CD4-positive, alpha-beta T cell (primary cell): ENCODE measurements at regions of chr7 and their contacts with region 1.

Region 1: GRCh38 chr7:1940402-1940786 is 270.3 kb downstream of the ELFN1 start:
- DNase-seq: peak; percentile 86 to 97 (median 90)
- ATAC-seq: peak; percentile 83
- H3K4me3 ChIP-seq: peak overlapping the region; percentile 85
- H3K4me3 Mint-ChIP-seq: peak overlapping the region; percentile 99
- H3K27ac ChIP-seq: peak overlapping the region; percentile 91 to 96
- H3K27ac Mint-ChIP-seq: peak overlapping the region; percentile 100
- H3K4me1 ChIP-seq: peaks cover 89% of the 10 kb centered on the region
- H3K4me1 Mint-ChIP-seq: peaks cover 66% of the 10 kb centered on the region
- H3K27me3 ChIP-seq: no peaks in the 10 kb centered on the region
- H3K27me3 Mint-ChIP-seq: peaks cover 4% of the 10 kb centered on the region
- CTCF ChIP-seq: no peak

Region 2: DNA sequence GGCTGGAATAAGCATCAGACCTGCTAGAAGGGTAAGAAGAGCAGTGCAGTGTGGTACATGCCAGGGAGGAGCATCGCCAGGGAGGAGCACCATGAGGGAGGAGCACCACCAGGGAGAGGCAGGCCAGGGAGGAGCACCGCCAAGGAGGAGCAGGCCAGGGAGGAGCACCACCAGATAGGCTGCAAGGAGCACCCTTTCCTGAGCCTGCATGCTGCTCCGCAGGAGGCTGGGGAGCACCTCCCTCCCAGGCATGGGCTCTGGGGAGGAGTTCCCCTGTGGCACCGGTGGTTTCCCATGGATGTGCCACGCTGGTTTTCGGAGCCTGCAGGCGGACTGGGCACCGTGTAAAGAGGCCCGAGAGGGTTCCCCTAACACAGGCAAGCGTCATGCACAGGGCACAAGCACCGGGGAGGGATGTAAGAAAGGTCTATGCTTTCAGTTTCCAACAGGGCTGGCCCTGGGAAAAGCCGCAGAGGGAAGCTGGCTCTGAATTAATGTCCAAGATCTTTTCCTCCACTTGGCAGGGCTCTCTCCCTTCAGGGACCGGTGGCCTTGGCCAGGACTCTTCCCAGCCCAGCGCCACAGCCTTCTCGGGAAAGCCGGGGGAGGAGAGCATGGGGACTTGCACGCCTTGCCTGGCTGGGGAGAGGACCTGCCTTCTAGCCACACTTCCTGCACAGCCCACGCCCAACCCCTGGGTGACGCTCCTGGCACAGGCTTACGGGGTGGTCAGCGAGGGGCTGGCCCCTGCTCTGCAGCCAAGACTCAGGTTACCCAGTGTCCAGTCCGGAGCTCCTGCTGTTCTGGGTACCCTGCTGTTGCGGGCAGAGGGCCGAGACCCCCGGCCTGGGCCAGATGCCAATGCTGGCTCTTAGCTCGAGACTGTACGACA is 864.0 kb before region 1 on chr7:
- CTCF ChIA-PET with region 1: no interaction called
- POLR2A ChIA-PET with region 1: no interaction called
- intact Hi-C with region 1: no loop called
- DNase-seq: no peak
- ATAC-seq: no peak
- H3K4me3 ChIP-seq: no peak overlapping the region
- H3K4me3 Mint-ChIP-seq: no peak overlapping the region
- H3K27ac ChIP-seq: no peak overlapping the region
- H3K27ac Mint-ChIP-seq: no peak overlapping the region
- H3K4me1 ChIP-seq: no peaks in the 10 kb centered on the region
- H3K4me1 Mint-ChIP-seq: no peaks in the 10 kb centered on the region
- H3K27me3 ChIP-seq: no peaks in the 10 kb centered on the region
- H3K27me3 Mint-ChIP-seq: no peaks in the 10 kb centered on the region
- CTCF ChIP-seq: no peak

Region 3: DNA sequence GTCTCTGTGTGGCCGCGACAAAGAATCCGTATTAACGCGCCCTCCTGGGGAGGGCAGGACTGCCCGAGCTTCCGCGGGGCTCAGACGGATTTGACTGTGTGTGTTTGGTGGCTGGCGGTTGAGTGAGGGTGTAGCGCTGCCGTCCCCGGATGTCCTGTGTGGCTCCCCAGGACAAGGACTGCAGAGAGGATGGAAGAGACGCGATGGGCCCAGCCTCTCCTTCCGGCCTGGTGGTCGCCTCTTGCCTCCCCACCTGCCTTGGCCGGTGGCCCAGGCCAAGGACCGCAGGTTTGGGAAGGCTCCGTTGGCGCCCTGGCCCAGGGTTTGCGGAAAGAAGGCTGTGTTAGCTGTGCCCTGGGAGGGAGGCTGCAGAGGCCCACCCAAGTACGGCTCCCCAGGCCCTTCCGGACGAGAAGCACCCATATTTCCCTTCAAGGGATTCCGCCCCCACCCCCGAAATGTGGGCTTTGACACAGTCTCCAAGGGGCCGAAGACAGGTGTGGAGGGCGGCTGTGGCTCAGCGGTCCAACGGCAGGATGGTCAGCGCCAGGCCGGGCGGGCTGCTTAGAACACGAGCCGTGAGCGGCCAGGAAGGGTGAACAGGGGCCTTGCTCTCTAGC is 705.4 kb before region 1 on chr7:
- CTCF ChIA-PET with region 1: no interaction called
- POLR2A ChIA-PET with region 1: no interaction called
- intact Hi-C with region 1: no loop called
- DNase-seq: peak in 2 of 14 experiments; percentile 24 to 38
- ATAC-seq: no peak
- H3K4me3 ChIP-seq: no peak overlapping the region
- H3K4me3 Mint-ChIP-seq: peak overlapping the region; percentile 43
- H3K27ac ChIP-seq: no peak overlapping the region
- H3K27ac Mint-ChIP-seq: peak overlapping the region; percentile 61
- H3K4me1 ChIP-seq: peaks cover 48% of the 10 kb centered on the region
- H3K4me1 Mint-ChIP-seq: peaks cover 33% of the 10 kb centered on the region
- H3K27me3 ChIP-seq: peaks cover 70 to 78% of the 10 kb centered on the region in 2 experiments
- H3K27me3 Mint-ChIP-seq: peaks cover 68% of the 10 kb centered on the region
- CTCF ChIP-seq: no peak

Region 4: DNA sequence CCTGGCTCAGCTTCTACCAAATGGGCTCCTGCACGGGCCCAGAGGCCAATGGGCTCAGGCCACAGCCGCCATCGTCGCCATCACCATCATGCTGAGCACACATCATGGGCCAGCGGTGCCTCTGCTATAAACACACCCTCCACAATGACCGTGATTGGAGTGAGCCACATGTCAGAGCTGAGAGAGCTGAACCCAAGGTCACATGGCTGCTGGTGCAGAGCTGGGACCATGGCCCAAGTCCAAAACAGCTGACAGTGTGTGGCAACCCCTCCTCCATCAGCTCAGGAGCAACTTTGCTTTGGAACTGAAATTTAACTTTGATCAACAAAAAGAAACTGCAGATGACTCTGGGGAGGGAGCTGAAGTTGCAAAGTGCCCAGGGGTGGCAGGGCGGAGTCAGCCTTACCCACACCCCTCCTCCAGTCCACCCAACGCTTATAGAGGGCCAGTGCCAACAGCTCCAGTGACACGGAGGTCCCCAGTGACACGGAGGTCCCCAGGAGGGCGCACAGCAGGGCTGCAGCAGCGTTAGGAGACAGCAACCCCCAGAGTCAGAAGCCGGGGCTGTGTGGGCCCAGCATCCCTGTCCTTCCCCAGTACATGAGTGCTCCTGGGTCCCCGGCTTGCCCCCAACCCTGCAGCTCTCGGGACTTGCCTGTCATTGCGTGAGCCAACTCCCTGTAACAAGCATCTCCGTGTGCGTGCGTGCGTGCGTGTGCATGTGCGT is 20.7 kb before region 1 on chr7:
- CTCF ChIA-PET with region 1: no interaction called
- POLR2A ChIA-PET with region 1: interaction called, 206 read pairs
- intact Hi-C with region 1: no loop called
- DNase-seq: peak in 3 of 14 experiments; percentile 31 to 47 (median 42)
- ATAC-seq: peak; percentile 25
- H3K4me3 ChIP-seq: peak overlapping the region; percentile 46
- H3K4me3 Mint-ChIP-seq: peak overlapping the region; percentile 86
- H3K27ac ChIP-seq: no peak overlapping the region
- H3K27ac Mint-ChIP-seq: peak overlapping the region; percentile 92
- H3K4me1 ChIP-seq: peaks cover 80% of the 10 kb centered on the region
- H3K4me1 Mint-ChIP-seq: peaks cover 73% of the 10 kb centered on the region
- H3K27me3 ChIP-seq: no peaks in the 10 kb centered on the region
- H3K27me3 Mint-ChIP-seq: no peaks in the 10 kb centered on the region
- CTCF ChIP-seq: no peak

Region 5: DNA sequence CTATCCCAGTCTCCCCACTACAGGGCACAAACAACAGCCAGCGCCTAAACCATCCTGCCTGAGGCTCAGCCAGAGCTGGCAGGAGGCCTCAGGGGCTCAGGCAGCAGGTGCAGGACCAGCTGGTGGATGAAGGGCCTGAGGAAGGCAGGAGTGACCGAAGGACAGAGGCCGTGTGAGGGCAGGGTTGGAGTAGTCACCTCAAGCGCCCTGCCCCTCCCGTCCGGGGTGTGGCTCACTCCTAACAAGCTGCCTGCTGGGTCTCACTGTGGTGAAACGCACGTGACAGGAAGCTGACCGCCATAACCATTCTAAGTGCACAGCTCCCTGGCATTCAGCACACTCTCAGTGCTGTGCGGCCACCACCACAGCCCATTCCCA is 10.8 kb after region 1 on chr7:
- CTCF ChIA-PET with region 1: no interaction called
- POLR2A ChIA-PET with region 1: interaction called, 28 read pairs
- intact Hi-C with region 1: no loop called
- DNase-seq: peak in 6 of 14 experiments; percentile 15 to 72 (median 40)
- ATAC-seq: peak; percentile 73
- H3K4me3 ChIP-seq: no peak overlapping the region
- H3K4me3 Mint-ChIP-seq: no peak overlapping the region
- H3K27ac ChIP-seq: no peak overlapping the region
- H3K27ac Mint-ChIP-seq: peak overlapping the region; percentile 63
- H3K4me1 ChIP-seq: peaks cover 19% of the 10 kb centered on the region
- H3K4me1 Mint-ChIP-seq: peaks cover 17% of the 10 kb centered on the region
- H3K27me3 ChIP-seq: no peaks in the 10 kb centered on the region
- H3K27me3 Mint-ChIP-seq: no peaks in the 10 kb centered on the region
- CTCF ChIP-seq: no peak

Region 6: GRCh38 chr7:2004841-2005725 is 64.7 kb after region 1 on chr7:
- CTCF ChIA-PET with region 1: no interaction called
- POLR2A ChIA-PET with region 1: no interaction called
- intact Hi-C with region 1: no loop called
- DNase-seq: peak in 2 of 14 experiments; percentile 1 to 2
- ATAC-seq: no peak
- H3K4me3 ChIP-seq: no peak overlapping the region
- H3K4me3 Mint-ChIP-seq: no peak overlapping the region
- H3K27ac ChIP-seq: no peak overlapping the region
- H3K27ac Mint-ChIP-seq: no peak overlapping the region
- H3K4me1 ChIP-seq: no peaks in the 10 kb centered on the region
- H3K4me1 Mint-ChIP-seq: peaks cover 8% of the 10 kb centered on the region
- H3K27me3 ChIP-seq: no peaks in the 10 kb centered on the region
- H3K27me3 Mint-ChIP-seq: no peaks in the 10 kb centered on the region
- CTCF ChIP-seq: no peak

Region 7: DNA sequence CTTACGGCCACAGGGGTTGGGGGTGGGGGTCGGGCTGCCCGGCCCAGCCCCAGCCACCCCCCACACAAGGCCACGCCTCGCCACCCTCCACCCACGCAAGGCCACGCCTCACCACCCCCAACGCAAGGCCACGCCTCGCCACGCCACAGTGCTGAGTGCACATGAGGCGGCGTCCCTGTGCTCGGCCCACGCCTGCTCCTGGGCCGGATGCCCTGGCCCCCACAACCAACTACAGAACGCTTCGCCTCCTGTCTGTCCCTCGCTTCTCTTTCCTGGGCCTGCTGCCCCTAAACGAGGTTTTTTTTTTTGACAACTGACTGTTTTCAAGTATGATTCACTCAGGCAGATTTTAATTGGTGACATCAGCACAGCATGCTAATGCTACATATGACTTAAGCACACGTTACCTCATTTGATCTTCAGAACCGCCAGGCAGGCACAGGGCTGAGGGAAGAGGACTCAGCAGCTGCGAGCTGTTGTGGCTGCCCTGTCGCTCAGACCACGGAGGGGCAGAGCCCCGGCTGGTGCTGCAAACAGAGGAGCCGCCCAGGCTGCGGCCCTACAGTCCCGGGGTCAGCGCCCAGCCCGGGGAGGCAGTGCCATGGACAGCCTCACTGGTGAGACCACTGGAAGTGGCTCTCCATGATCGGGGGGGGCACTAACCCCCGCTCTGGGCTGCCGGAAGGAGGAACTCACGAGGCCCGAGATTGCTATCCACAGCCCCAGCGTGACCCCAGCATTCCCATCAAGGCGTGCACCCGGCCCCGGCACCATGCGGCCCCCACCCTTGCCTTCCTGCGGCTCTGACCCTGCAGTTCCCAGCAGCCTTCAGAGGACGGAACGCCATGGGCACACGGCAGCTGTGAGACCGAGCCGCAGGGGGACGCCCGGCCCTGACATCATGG is 79.5 kb after region 1 on chr7:
- CTCF ChIA-PET with region 1: no interaction called
- POLR2A ChIA-PET with region 1: no interaction called
- intact Hi-C with region 1: loop called in 1 of 2 experiments (anchors 1 kb)
- DNase-seq: peak in 9 of 14 experiments; percentile 13 to 77 (median 49)
- ATAC-seq: peak; percentile 91
- H3K4me3 ChIP-seq: peak overlapping the region; percentile 24
- H3K4me3 Mint-ChIP-seq: peak overlapping the region; percentile 49
- H3K27ac ChIP-seq: peak overlapping the region in 1 of 2 donors; percentile 51
- H3K27ac Mint-ChIP-seq: peak overlapping the region; percentile 81
- H3K4me1 ChIP-seq: peaks cover 15% of the 10 kb centered on the region
- H3K4me1 Mint-ChIP-seq: peaks cover 17% of the 10 kb centered on the region
- H3K27me3 ChIP-seq: no peaks in the 10 kb centered on the region
- H3K27me3 Mint-ChIP-seq: no peaks in the 10 kb centered on the region
- CTCF ChIP-seq: no peak

Region 8: GRCh38 chr7:2051707-2052656 is 111.6 kb after region 1 on chr7:
- CTCF ChIA-PET with region 1: no interaction called
- POLR2A ChIA-PET with region 1: no interaction called
- intact Hi-C with region 1: no loop called
- DNase-seq: no peak
- ATAC-seq: no peak
- H3K4me3 ChIP-seq: no peak overlapping the region
- H3K4me3 Mint-ChIP-seq: no peak overlapping the region
- H3K27ac ChIP-seq: no peak overlapping the region
- H3K27ac Mint-ChIP-seq: no peak overlapping the region
- H3K4me1 ChIP-seq: peaks cover 9% of the 10 kb centered on the region
- H3K4me1 Mint-ChIP-seq: peaks cover 7% of the 10 kb centered on the region
- H3K27me3 ChIP-seq: no peaks in the 10 kb centered on the region
- H3K27me3 Mint-ChIP-seq: no peaks in the 10 kb centered on the region
- CTCF ChIP-seq: no peak

Region 9: GRCh38 chr7:2354186-2354938 is 414.0 kb after region 1 on chr7 and contains the start of gene EIF3B:
- CTCF ChIA-PET with region 1: no interaction called
- POLR2A ChIA-PET with region 1: interaction called, 10 read pairs
- intact Hi-C with region 1: loop called in 1 of 2 experiments (anchors 5 kb)
- DNase-seq: peak; percentile 81 to 96 (median 88)
- ATAC-seq: peak; percentile 86
- H3K4me3 ChIP-seq: peak within 1 kb of the TSS; percentile 85
- H3K4me3 Mint-ChIP-seq: peak within 1 kb of the TSS; percentile 92
- H3K27ac ChIP-seq: peak within 1 kb of the TSS; percentile 99 to 100
- H3K27ac Mint-ChIP-seq: peak within 1 kb of the TSS; percentile 100
- H3K4me1 ChIP-seq: peaks cover 53% of the 10 kb centered on the region
- H3K4me1 Mint-ChIP-seq: peaks cover 37% of the 10 kb centered on the region
- H3K27me3 ChIP-seq: no peaks in the 10 kb centered on the region
- H3K27me3 Mint-ChIP-seq: no peaks in the 10 kb centered on the region
- CTCF ChIP-seq: no peak
- total RNA-seq, gene EIF3B: 166 to 167 TPM